ENCODE measurements at regions of chr2 and their contacts with region 1.

Region 1: DNA sequence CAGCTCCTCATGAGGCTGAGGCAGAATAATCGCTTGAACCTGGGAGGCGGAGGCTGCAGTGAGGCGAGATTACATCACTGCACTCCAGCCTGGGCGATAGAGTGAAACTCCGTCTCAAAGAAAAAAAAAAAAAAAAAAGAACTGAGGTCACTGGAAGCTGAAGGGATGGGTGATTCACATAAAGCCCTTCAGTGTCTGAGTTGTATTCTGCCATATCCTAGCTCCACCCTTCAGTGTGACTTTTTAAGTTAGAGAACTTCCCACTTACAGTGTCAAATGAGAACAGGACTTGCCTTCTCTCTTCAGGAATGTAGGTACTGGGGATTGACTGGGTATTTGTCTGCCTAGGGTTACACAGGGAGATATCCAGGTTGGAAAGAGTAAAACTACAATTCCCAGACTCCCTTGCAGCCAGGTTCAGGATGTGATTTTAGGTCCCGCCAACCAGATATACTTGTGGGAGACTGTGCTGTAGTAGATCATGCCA is 37.9 kb downstream of the EHD3 start:
- DNase-seq: no peak
- H3K4me3 ChIP-seq: no peak overlapping the region
- H3K27ac ChIP-seq: no peak overlapping the region
- H3K4me1 ChIP-seq: peaks cover 0 to 35% (median 25%) of the 10 kb centered on the region in 4 donors
- H3K27me3 ChIP-seq: no peaks in the 10 kb centered on the region
- CTCF ChIP-seq: no peak

Region 2: GRCh38 chr2:31297751-31298150 is 25.9 kb after region 1 on chr2:
- intact Hi-C with region 1: loop called (anchors 2 kb)
- DNase-seq: no peak
- H3K4me3 ChIP-seq: no peak overlapping the region
- H3K27ac ChIP-seq: peak overlapping the region; percentile 77 to 78
- H3K4me1 ChIP-seq: peaks cover 4 to 48% (median 34%) of the 10 kb centered on the region in 4 donors
- H3K27me3 ChIP-seq: no peaks in the 10 kb centered on the region
- CTCF ChIP-seq: no peak